ENCODE measurements at regions of chr10 and their contacts with region 1.

Region 1: DNA sequence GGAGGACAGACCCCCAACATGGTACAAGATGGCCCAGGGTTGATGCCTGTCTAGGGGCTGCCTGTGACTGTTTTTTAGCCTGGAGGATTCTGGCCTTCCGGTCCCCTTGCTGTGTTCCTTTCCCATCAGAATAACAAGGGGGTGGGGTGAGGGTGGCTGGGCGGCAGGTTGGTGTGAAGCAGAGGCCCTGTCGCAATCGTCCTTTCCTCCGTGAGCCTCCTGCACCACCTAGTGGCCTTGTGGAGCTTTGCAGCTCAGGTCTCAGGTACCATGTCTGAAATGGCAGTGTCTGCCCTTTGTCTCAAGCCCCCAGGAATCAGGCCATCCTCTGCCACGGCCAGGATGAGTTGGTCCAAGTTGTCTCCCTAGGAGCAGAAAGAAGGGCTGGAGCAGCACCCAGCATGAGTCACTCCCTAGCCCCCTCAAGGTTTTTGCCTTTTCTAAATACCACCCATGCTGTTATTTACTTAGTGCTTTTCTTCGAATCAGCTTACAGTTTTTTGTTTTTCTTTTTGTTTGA is 24.2 kb downstream of the TACR2 start:
- DNase-seq: peak; percentile 69
- ATAC-seq: peak; percentile 96
- H3K4me3 ChIP-seq: no peak overlapping the region
- H3K27ac ChIP-seq: no peak overlapping the region
- H3K4me1 ChIP-seq: no peaks in the 10 kb centered on the region
- H3K27me3 ChIP-seq: peaks cover 0 to 6% of the 10 kb centered on the region in 2 experiments; a peak in 1 of 5 replicates
- CTCF ChIP-seq: peak; percentile 99
- EP300 ChIP-seq: no peak
- POLR2A ChIP-seq: no peak
- RAD21 ChIP-seq: peak; percentile 94

Region 2: GRCh38 chr10:68988530-68989316 is 403.8 kb before region 1 on chr10 and contains the start of gene KIFBP:
- CTCF ChIA-PET with region 1: no interaction called
- POLR2A ChIA-PET with region 1: no interaction called
- in situ Hi-C with region 1: no loop called
- intact Hi-C with region 1: no loop called
- DNase-seq: peak; percentile 95
- ATAC-seq: peak; percentile 90
- H3K4me3 ChIP-seq: peak within 1 kb of the TSS; percentile 73 to 91 (median 79)
- H3K27ac ChIP-seq: peak within 1 kb of the TSS; percentile 67
- H3K4me1 ChIP-seq: peaks cover 38% of the 10 kb centered on the region
- H3K27me3 ChIP-seq: no peaks in the 10 kb centered on the region; a peak in 1 of 5 replicates
- CTCF ChIP-seq: peak; percentile 75
- EP300 ChIP-seq: 0 out of 4 replicates have a peak, but pooled peaks of 1 of the 2 experiments have one; percentile 6
- POLR2A ChIP-seq: peak; percentile 81 to 91
- RAD21 ChIP-seq: no peak
- total RNA-seq, gene KIFBP: 21.9 and 29.9 TPM in 2 replicates

Region 3: DNA sequence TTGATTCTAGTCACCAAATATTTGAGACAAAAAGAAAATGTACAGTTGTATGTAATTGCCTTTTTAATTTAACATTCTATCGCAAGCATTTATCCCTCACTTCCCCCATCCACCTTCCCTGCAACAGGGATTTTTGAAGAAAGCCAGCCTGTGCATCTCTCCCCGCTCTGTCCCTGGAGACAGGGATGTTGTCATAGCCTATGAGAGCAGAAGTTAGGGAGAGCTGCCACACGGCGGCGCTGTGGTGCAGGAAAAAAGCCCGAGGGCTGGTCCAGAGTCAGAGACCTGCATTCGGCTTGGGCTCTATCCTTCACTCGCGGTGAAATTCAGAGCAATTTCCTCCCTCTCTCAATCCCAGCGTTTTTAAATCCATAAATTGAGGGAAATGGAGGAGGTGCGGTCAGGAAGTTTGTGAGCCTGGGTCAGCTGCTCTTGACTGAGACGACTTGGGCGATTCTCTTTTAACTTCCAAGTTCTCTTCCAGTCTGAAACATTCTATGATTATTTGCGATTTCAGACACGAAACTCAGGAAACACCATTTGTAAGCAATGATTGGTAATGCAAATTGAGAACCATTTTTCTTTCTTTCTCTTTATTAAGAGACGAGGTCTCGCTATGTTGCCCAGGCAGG is 154.9 kb before region 1 on chr10:
- CTCF ChIA-PET with region 1: interaction called, 34 read pairs
- POLR2A ChIA-PET with region 1: no interaction called
- in situ Hi-C with region 1: loop called (anchors 5 kb)
- intact Hi-C with region 1: loop called (anchors 1 kb)
- DNase-seq: peak; percentile 50
- ATAC-seq: peak; percentile 99
- H3K4me3 ChIP-seq: no peak overlapping the region
- H3K27ac ChIP-seq: no peak overlapping the region
- H3K4me1 ChIP-seq: no peaks in the 10 kb centered on the region
- H3K27me3 ChIP-seq: no peaks in the 10 kb centered on the region
- CTCF ChIP-seq: peak; percentile 93
- EP300 ChIP-seq: no peak
- POLR2A ChIP-seq: no peak
- RAD21 ChIP-seq: peak; percentile 87